ENCODE measurements at regions of chr4 and their contacts with region 1.

Region 1: GRCh38 chr4:94451695-94452475 is at the start of gene PDLIM5:
- DNase-seq: peak; percentile 87
- ATAC-seq: peak; percentile 69
- H3K4me3 ChIP-seq: peak within 1 kb of the TSS; percentile 93
- H3K27ac ChIP-seq: peak within 1 kb of the TSS; percentile 48
- H3K4me1 ChIP-seq: peaks cover 36% of the 10 kb centered on the region
- H3K27me3 ChIP-seq: no peaks in the 10 kb centered on the region
- CTCF ChIP-seq: no peak
- total RNA-seq, gene PDLIM5: 30.7 and 57.8 TPM in 2 replicates

Region 2: DNA sequence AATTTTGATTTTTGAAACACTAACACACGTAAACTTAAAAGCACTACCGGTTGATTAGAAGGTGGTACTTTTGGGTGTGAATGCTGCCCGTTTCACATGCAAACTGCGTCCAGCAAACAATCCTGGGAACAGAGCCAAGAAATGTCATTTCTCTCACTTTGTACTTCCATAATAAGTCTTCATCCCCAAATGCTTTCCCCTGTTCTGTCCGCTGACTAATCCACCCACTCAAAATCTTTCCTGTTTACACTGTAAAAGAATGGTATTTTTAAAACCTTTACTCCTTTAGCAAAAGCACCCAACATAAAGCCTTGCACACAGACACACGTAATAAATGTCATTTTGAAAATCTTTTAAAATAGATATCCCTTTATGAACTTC is 39.2 kb before region 1 on chr4:
- CTCF ChIA-PET with region 1: no interaction called
- POLR2A ChIA-PET with region 1: interaction called, 11 read pairs
- intact Hi-C with region 1: loop called (anchors 1 kb)
- DNase-seq: peak; percentile 85
- ATAC-seq: peak; percentile 92
- H3K4me3 ChIP-seq: peak overlapping the region; percentile 37
- H3K27ac ChIP-seq: peak overlapping the region; percentile 70
- H3K4me1 ChIP-seq: peaks cover 23% of the 10 kb centered on the region
- H3K27me3 ChIP-seq: no peaks in the 10 kb centered on the region
- CTCF ChIP-seq: no peak

Region 3: GRCh38 chr4:94472056-94472824 is 20.4 kb after region 1 on chr4:
- CTCF ChIA-PET with region 1: no interaction called
- POLR2A ChIA-PET with region 1: no interaction called
- intact Hi-C with region 1: loop called (anchors 2 kb)
- DNase-seq: peak; percentile 84
- ATAC-seq: peak; percentile 93
- H3K4me3 ChIP-seq: no peak overlapping the region
- H3K27ac ChIP-seq: peak overlapping the region; percentile 50
- H3K4me1 ChIP-seq: peaks cover 31% of the 10 kb centered on the region
- H3K27me3 ChIP-seq: no peaks in the 10 kb centered on the region
- CTCF ChIP-seq: no peak

Region 4: GRCh38 chr4:94488662-94489061 is 36.8 kb after region 1 on chr4:
- CTCF ChIA-PET with region 1: no interaction called
- POLR2A ChIA-PET with region 1: no interaction called
- intact Hi-C with region 1: loop called (anchors 5 kb)
- DNase-seq: peak; percentile 91
- ATAC-seq: peak; percentile 83
- H3K4me3 ChIP-seq: 0 out of 2 replicates have a peak overlapping the region, but pooled peaks have one; percentile 25
- H3K27ac ChIP-seq: peak overlapping the region; percentile 80
- H3K4me1 ChIP-seq: peaks cover 69% of the 10 kb centered on the region
- H3K27me3 ChIP-seq: no peaks in the 10 kb centered on the region
- CTCF ChIP-seq: no peak

Region 5: DNA sequence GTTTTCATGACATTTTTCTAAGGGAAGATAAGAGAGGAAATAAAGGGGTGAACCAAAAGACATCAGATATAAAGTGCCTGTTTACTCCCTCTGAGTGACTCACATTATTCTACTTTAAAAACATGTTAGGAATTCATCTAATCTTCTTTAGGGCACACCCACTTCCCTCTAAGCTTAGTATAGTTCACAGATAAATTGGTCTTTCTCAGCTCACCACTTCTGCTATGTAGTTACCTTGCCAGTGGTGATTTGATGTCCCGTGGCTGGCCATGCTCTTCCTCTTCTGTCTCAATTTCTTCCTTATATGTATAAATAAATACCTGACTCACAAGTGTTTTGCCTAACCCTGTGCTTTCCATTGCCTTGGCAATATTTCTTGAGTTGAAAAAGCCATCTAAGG is 96.7 kb after region 1 on chr4:
- CTCF ChIA-PET with region 1: no interaction called
- POLR2A ChIA-PET with region 1: interaction called, 3 read pairs
- intact Hi-C with region 1: loop called (anchors 5 kb)
- DNase-seq: peak; percentile 86
- ATAC-seq: peak; percentile 81
- H3K4me3 ChIP-seq: peak overlapping the region; percentile 15; the same call in 1 of the 2 replicates
- H3K27ac ChIP-seq: peak overlapping the region; percentile 72
- H3K4me1 ChIP-seq: peaks cover 57% of the 10 kb centered on the region
- H3K27me3 ChIP-seq: no peaks in the 10 kb centered on the region
- CTCF ChIP-seq: no peak

Region 6: GRCh38 chr4:94595879-94596483 is 144.1 kb after region 1 on chr4:
- CTCF ChIA-PET with region 1: no interaction called
- POLR2A ChIA-PET with region 1: no interaction called
- intact Hi-C with region 1: loop called (anchors 1 kb)
- DNase-seq: peak; percentile 60
- ATAC-seq: peak; percentile 31; the same call in 1 of the 2 replicates
- H3K4me3 ChIP-seq: no peak overlapping the region
- H3K27ac ChIP-seq: no peak overlapping the region
- H3K4me1 ChIP-seq: 0 out of 2 replicates have a peak, but pooled peaks cover 8% of the 10 kb centered on the region
- H3K27me3 ChIP-seq: no peaks in the 10 kb centered on the region
- CTCF ChIP-seq: peak; percentile 82

Region 7: GRCh38 chr4:94757192-94758139 is 305.6 kb after region 1 on chr4 and contains the start of gene BMPR1B:
- CTCF ChIA-PET with region 1: no interaction called
- POLR2A ChIA-PET with region 1: no interaction called
- intact Hi-C with region 1: loop called (anchors 5 kb)
- DNase-seq: peak; percentile 65
- ATAC-seq: peak; percentile 10; the same call in 1 of the 2 replicates
- H3K4me3 ChIP-seq: peak within 1 kb of the TSS; percentile 94
- H3K27ac ChIP-seq: peak within 1 kb of the TSS; percentile 78
- H3K4me1 ChIP-seq: peaks cover 23% of the 10 kb centered on the region
- H3K27me3 ChIP-seq: no peaks in the 10 kb centered on the region
- CTCF ChIP-seq: no peak
- total RNA-seq, gene BMPR1B: 5.0 and 7.1 TPM in 2 replicates

Region 8: DNA sequence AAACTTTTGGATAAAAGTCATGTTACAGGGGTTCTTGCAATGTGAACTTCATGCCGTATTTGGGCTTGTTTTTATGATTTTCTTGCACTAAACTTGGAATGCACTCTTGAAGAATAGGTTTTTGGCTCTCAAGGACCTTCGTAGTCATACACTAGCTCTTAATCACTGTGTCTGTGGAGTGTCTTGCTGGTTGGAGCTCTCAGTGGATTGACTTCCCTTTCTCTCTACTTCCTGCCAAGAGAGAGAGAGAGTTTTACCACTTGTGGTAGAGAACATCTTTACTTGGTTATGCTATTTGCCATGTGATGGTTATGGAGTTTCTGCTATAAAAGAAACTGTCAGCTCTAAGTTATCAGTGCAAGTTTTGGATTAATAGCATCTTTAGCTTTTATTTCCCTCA is 418.3 kb after region 1 on chr4:
- CTCF ChIA-PET with region 1: no interaction called
- POLR2A ChIA-PET with region 1: no interaction called
- intact Hi-C with region 1: no loop called
- DNase-seq: no peak
- ATAC-seq: no peak
- H3K4me3 ChIP-seq: no peak overlapping the region
- H3K27ac ChIP-seq: no peak overlapping the region
- H3K4me1 ChIP-seq: no peaks in the 10 kb centered on the region
- H3K27me3 ChIP-seq: no peaks in the 10 kb centered on the region
- CTCF ChIP-seq: no peak